ENCODE measurements at regions of chr1 and their contacts with region 1.

Region 1: GRCh38 chr1:223087291-223088255 is 55.5 kb downstream of the TLR5 start:
- DNase-seq: no peak
- ATAC-seq: no peak
- H3K4me3 Mint-ChIP-seq: no peak overlapping the region
- H3K27ac Mint-ChIP-seq: no peak overlapping the region
- H3K4me1 Mint-ChIP-seq: peaks cover 9% of the 10 kb centered on the region
- H3K27me3 Mint-ChIP-seq: no peaks in the 10 kb centered on the region
- CTCF ChIP-seq: no peak

Region 2: GRCh38 chr1:222792744-222793143 is 294.8 kb before region 1 on chr1:
- CTCF ChIA-PET with region 1: interaction called, 18 read pairs
- POLR2A ChIA-PET with region 1: no interaction called
- intact Hi-C with region 1: no loop called
- DNase-seq: no peak
- ATAC-seq: no peak
- H3K4me3 Mint-ChIP-seq: no peak overlapping the region
- H3K27ac Mint-ChIP-seq: no peak overlapping the region
- H3K4me1 Mint-ChIP-seq: peaks cover 22% of the 10 kb centered on the region
- H3K27me3 Mint-ChIP-seq: no peaks in the 10 kb centered on the region
- CTCF ChIP-seq: peak; percentile 70

Region 3: DNA sequence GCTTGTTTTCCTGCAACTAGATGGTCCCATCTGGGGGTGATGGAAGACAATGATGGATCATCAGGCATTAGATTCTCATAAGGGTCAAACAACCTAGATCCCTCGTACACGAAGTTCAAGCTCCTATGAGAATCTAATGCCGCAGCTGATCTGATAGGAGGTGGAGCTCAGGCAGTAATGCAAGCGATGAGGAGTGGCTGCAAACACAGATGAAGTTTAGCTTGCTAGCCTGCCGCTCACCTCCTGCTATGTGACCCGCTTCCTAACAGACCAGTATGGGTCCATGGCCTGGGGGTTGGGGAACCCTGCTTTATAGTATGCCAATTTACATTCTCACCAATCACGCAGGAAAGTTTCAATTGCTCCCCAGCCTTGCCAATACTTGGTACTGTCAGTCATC is 18.0 kb after region 1 on chr1:
- CTCF ChIA-PET with region 1: interaction called, 10 read pairs
- POLR2A ChIA-PET with region 1: no interaction called
- intact Hi-C with region 1: no loop called
- DNase-seq: no peak
- ATAC-seq: no peak
- H3K4me3 Mint-ChIP-seq: no peak overlapping the region
- H3K27ac Mint-ChIP-seq: no peak overlapping the region
- H3K4me1 Mint-ChIP-seq: peaks cover 11% of the 10 kb centered on the region
- H3K27me3 Mint-ChIP-seq: peaks cover 4% of the 10 kb centered on the region
- CTCF ChIP-seq: no peak